Mammary epithelial cell (primary cell): ENCODE measurements at regions of chr7 and their contacts with region 1.

Region 1: GRCh38 chr7:150356265-150356897 is 12.2 kb upstream of the REPIN1 start:
- DNase-seq: no peak
- H3K4me3 ChIP-seq: no peak overlapping the region
- H3K27ac ChIP-seq: no peak overlapping the region
- H3K4me1 ChIP-seq: peaks cover 13% of the 10 kb centered on the region
- H3K27me3 ChIP-seq: no peaks in the 10 kb centered on the region
- CTCF ChIP-seq: peak; percentile 40 to 63

Region 2: GRCh38 chr7:150399421-150400007 is 43.1 kb after region 1 on chr7:
- CTCF ChIA-PET with region 1: no interaction called
- dilution Hi-C with region 1: no loop called
- in situ Hi-C with region 1: no loop called
- intact Hi-C with region 1: no loop called
- DNase-seq: no peak
- H3K4me3 ChIP-seq: no peak overlapping the region
- H3K27ac ChIP-seq: no peak overlapping the region
- H3K4me1 ChIP-seq: peaks cover 24% of the 10 kb centered on the region
- H3K27me3 ChIP-seq: no peaks in the 10 kb centered on the region
- CTCF ChIP-seq: no peak

Region 3: GRCh38 chr7:150420987-150421674 is 64.8 kb after region 1 on chr7:
- CTCF ChIA-PET with region 1: no interaction called
- dilution Hi-C with region 1: no loop called
- in situ Hi-C with region 1: no loop called
- intact Hi-C with region 1: loop called (anchors 1 kb)
- DNase-seq: peak; percentile 66
- H3K4me3 ChIP-seq: no peak overlapping the region
- H3K27ac ChIP-seq: no peak overlapping the region
- H3K4me1 ChIP-seq: no peaks in the 10 kb centered on the region
- H3K27me3 ChIP-seq: no peaks in the 10 kb centered on the region
- CTCF ChIP-seq: peak; percentile 81 to 86

Region 4: DNA sequence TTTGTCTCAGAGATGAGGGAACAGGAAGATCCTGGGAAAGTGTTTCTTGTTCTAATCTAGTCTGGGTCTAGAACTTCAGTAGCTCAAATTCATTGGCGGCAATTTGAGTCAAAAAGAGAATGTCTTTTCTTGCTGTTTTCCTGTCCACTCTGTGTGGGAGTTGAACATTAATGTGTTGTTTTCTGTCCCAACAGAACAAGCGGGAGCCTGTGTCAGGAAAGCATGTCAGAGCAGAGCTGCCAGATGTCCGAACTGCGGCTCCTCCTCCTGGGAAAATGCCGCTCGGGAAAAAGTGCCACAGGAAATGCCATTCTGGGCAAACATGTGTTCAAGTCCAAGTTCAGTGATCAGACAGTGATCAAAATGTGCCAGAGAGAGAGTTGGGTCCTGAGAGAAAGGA is 110.1 kb after region 1 on chr7:
- CTCF ChIA-PET with region 1: no interaction called
- dilution Hi-C with region 1: no loop called
- in situ Hi-C with region 1: no loop called
- intact Hi-C with region 1: no loop called
- DNase-seq: peak; percentile 67
- H3K4me3 ChIP-seq: no peak overlapping the region
- H3K27ac ChIP-seq: peak overlapping the region; percentile 33
- H3K4me1 ChIP-seq: peaks cover 27% of the 10 kb centered on the region
- H3K27me3 ChIP-seq: no peaks in the 10 kb centered on the region
- CTCF ChIP-seq: no peak